ENCODE measurements at regions of chr4 and their contacts with region 1.

Region 1: GRCh38 chr4:143381171-143382118 is 44.8 kb downstream of the GAB1 start:
- DNase-seq: peak; percentile 69
- H3K4me3 Mint-ChIP-seq: no peak overlapping the region
- H3K27ac Mint-ChIP-seq: peak overlapping the region; percentile 86
- H3K4me1 Mint-ChIP-seq: peaks cover 19% of the 10 kb centered on the region
- H3K27me3 Mint-ChIP-seq: no peaks in the 10 kb centered on the region
- CTCF ChIP-seq: no peak

Region 2: DNA sequence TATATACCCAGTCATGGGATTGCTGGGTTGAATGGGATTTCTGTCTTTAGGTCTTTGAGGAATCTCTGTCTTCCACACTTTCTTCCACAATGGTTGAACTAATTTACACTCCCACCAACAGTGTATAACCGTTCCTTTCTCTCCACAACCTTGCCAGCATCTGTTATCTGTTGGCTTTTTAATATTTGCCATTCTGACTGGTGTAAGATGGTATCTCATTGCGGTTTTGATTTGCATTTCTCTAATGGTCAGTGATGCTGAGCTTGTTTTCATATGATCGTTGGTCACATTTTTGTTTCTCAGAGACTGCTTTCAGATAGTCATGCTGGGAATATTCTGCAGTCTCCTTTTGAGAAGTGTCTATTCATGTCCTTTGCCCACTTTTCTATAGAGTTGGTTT is 322.2 kb before region 1 on chr4:
- CTCF ChIA-PET with region 1: no interaction called
- POLR2A ChIA-PET with region 1: no interaction called
- intact Hi-C with region 1: no loop called
- DNase-seq: no peak
- H3K4me3 Mint-ChIP-seq: no peak overlapping the region
- H3K27ac Mint-ChIP-seq: no peak overlapping the region
- H3K4me1 Mint-ChIP-seq: peaks cover 4% of the 10 kb centered on the region
- H3K27me3 Mint-ChIP-seq: no peaks in the 10 kb centered on the region
- CTCF ChIP-seq: no peak

Region 3: GRCh38 chr4:143358923-143359643 is 22.4 kb before region 1 on chr4:
- CTCF ChIA-PET with region 1: interaction called, 4 read pairs
- POLR2A ChIA-PET with region 1: interaction called, 12 read pairs
- intact Hi-C with region 1: no loop called
- DNase-seq: peak; percentile 52
- H3K4me3 Mint-ChIP-seq: peak overlapping the region; percentile 7
- H3K27ac Mint-ChIP-seq: peak overlapping the region; percentile 58
- H3K4me1 Mint-ChIP-seq: peaks cover 57% of the 10 kb centered on the region
- H3K27me3 Mint-ChIP-seq: no peaks in the 10 kb centered on the region
- CTCF ChIP-seq: no peak

Region 4: GRCh38 chr4:143616771-143617170 is 235.3 kb after region 1 on chr4:
- CTCF ChIA-PET with region 1: no interaction called
- POLR2A ChIA-PET with region 1: no interaction called
- intact Hi-C with region 1: no loop called
- DNase-seq: peak; percentile 75
- H3K4me3 Mint-ChIP-seq: no peak overlapping the region
- H3K27ac Mint-ChIP-seq: no peak overlapping the region
- H3K4me1 Mint-ChIP-seq: no peaks in the 10 kb centered on the region
- H3K27me3 Mint-ChIP-seq: peaks cover 93% of the 10 kb centered on the region
- CTCF ChIP-seq: no peak

Measured in MCF 10A (cell line).